ENCODE measurements at regions of chr2 and their contacts with region 1.

Region 1: DNA sequence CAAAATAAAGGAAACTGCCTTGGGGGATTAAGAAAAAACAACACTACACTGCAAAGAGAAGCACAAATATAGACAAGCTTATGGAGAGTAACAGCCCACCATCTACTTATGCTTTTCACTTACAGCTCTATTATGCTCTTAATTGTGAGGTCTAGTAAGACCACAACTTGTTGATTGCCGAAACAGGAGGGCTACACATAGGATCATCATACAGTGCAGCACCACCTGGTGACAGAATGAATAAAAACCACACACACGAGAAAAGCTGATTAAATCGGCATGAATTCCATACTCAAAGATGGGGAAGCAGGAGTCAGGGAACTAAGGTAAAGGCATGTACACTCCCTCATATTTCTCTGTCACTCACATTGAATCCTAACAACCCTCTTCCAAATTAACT is 259.2 kb downstream of the IKZF2 start:
- DNase-seq: peak; percentile 60
- H3K4me3 ChIP-seq: no peak overlapping the region
- H3K27ac ChIP-seq: no peak overlapping the region
- H3K4me1 ChIP-seq: no peaks in the 10 kb centered on the region
- H3K27me3 ChIP-seq: no peaks in the 10 kb centered on the region
- CTCF ChIP-seq: peak; percentile 10 to 38
- POLR2A ChIP-seq: no peak

Region 2: GRCh38 chr2:212157012-212157411 is 735.2 kb before region 1 on chr2:
- CTCF ChIA-PET with region 1: no interaction called
- POLR2A ChIA-PET with region 1: no interaction called
- dilution Hi-C with region 1: no loop called
- intact Hi-C with region 1: no loop called
- DNase-seq: no peak
- H3K4me3 ChIP-seq: no peak overlapping the region
- H3K27ac ChIP-seq: no peak overlapping the region
- H3K4me1 ChIP-seq: no peaks in the 10 kb centered on the region
- H3K27me3 ChIP-seq: no peaks in the 10 kb centered on the region
- CTCF ChIP-seq: no peak
- POLR2A ChIP-seq: no peak

Region 3: DNA sequence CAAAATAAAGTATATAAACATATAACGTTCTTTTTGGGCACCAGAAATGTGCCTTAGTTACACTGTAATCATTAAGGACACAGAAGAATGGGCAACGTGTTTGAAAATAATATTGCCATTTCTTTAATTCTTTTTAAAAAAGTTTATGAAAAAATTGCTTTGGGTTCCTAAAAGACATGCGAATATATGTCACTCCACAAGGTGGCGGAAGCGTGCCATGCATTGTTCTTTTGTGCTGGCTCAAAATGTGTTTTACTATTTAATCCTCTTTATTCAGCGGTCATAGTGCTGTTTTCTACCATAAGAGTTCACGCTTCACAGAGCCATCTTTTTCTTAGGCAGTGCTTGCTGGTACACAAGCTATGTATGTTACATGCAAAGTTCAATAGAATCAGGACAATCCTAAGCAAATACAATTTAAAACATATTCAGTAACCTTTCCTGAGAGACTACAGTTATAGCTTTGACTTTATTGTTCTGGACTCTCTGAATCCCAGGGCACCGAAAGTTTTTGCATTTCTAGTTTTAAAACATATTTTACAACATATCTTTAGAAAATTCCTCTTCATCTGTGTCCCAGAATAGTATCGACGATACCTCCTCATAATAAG is 205.8 kb before region 1 on chr2:
- CTCF ChIA-PET with region 1: interaction called, 27 read pairs
- POLR2A ChIA-PET with region 1: no interaction called
- dilution Hi-C with region 1: no loop called
- intact Hi-C with region 1: loop called (anchors 1 kb)
- DNase-seq: peak; percentile 67
- H3K4me3 ChIP-seq: no peak overlapping the region
- H3K27ac ChIP-seq: no peak overlapping the region
- H3K4me1 ChIP-seq: peaks cover 3% of the 10 kb centered on the region
- H3K27me3 ChIP-seq: no peaks in the 10 kb centered on the region
- CTCF ChIP-seq: peak; percentile 60 to 68
- POLR2A ChIP-seq: no peak

Region 4: DNA sequence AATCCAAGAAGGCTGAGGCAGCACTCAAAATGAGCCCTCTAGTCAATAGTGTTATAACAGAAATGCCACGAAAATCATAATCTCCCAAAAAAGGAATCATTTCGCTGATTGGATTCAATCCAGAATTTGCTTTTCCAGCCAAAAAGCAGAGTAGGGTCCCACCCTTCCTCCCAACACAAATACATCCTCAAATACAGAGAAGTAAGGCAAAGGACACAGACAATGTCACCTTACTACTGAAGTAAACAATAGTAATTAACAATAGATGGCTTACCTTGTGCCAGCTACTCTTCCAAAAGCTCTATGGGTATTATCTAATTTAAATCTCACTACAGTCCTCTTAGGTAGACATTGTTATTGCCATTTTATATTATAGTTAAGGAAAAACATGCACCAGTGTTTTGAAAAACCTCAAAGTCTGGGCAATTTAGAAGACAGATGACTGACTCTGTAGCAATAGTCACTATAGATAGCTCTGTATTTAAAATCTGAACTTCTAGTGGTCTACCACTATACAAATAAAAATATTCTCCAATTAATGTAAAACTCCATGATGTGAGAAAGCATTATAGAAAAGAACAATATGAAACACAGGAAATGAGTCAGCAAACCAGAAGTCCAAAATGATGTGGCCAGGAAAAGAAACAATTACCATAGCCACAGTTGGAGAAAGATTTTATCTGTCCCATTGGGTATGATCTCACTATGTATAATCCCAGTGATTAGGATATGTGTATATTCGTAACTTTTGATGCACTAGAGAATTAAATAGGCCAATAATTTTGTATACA is 48.6 kb before region 1 on chr2:
- CTCF ChIA-PET with region 1: interaction called, 16 read pairs
- POLR2A ChIA-PET with region 1: no interaction called
- dilution Hi-C with region 1: no loop called
- intact Hi-C with region 1: loop called (anchors 5 kb)
- DNase-seq: peak; percentile 90
- H3K4me3 ChIP-seq: no peak overlapping the region
- H3K27ac ChIP-seq: peak overlapping the region; percentile 96
- H3K4me1 ChIP-seq: peaks cover 21% of the 10 kb centered on the region
- H3K27me3 ChIP-seq: no peaks in the 10 kb centered on the region
- CTCF ChIP-seq: no peak
- POLR2A ChIP-seq: no peak

Region 5: GRCh38 chr2:212912445-212913103 is 20.4 kb after region 1 on chr2:
- CTCF ChIA-PET with region 1: interaction called, 10 read pairs
- POLR2A ChIA-PET with region 1: no interaction called
- dilution Hi-C with region 1: no loop called
- intact Hi-C with region 1: no loop called
- DNase-seq: peak; percentile 87
- H3K4me3 ChIP-seq: peak overlapping the region in 1 of 3 experiments; percentile 41
- H3K27ac ChIP-seq: peak overlapping the region; percentile 73
- H3K4me1 ChIP-seq: peaks cover 16% of the 10 kb centered on the region
- H3K27me3 ChIP-seq: no peaks in the 10 kb centered on the region
- CTCF ChIP-seq: no peak
- POLR2A ChIP-seq: no peak

Measured in endothelial cell of umbilical vein (primary cell).